A673 (cell line): ENCODE measurements at regions of chr6 and their contacts with region 1.

Region 1: GRCh38 chr6:88211446-88211845 is 45.3 kb upstream of the CNR1 start:
- DNase-seq: peak; percentile 15
- H3K4me3 ChIP-seq: no peak overlapping the region
- H3K27ac ChIP-seq: no peak overlapping the region
- H3K4me1 ChIP-seq: no peaks in the 10 kb centered on the region
- H3K27me3 ChIP-seq: no peaks in the 10 kb centered on the region
- CTCF ChIP-seq: no peak

Region 2: DNA sequence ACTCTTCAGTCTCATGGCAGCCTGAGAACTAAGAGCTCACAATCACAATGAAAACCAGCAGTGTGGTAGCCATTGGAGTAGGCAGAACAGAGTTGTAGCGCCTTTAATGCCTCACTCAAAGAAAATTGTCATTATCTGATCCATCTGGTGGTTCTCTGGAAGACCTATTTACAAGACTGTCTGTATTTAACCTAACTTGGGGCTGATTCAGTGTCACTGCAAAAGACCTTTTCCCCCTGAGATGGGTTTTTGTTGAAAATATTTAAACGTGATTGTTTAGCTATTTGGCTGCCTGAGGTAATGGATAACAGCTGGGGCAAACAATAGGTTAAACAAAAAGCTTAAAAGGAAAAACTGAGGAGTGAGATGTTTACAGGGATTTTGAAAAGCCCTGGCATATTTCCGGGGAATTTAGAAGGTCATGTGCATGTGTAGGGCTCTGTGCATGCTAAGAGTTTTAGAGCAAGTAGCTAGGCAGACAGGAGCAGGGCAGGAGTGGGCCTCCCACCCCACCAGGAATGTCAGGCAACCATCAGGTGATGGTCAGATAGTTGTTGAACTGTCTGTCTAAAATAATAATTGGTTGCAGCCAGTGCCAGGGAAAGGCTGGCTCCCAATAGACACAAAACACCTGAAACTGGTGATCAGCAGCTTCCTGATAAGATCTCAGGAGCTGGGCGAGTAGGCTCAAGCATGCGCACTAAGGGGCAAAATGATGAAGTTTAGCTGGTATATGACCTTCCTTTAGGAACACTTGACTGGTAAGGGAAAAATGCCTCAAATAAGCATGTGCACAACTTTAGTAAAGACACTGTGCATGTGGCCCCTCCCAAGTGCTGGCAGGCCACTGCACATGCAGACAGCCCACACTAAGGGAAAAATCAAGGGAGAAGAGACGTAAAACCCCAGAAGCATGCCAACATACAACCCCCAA is 438.6 kb before region 1 on chr6:
- CTCF ChIA-PET with region 1: no interaction called
- POLR2A ChIA-PET with region 1: no interaction called
- intact Hi-C with region 1: no loop called
- DNase-seq: no peak
- H3K4me3 ChIP-seq: no peak overlapping the region
- H3K27ac ChIP-seq: no peak overlapping the region
- H3K4me1 ChIP-seq: no peaks in the 10 kb centered on the region
- H3K27me3 ChIP-seq: no peaks in the 10 kb centered on the region
- CTCF ChIP-seq: no peak

Region 3: DNA sequence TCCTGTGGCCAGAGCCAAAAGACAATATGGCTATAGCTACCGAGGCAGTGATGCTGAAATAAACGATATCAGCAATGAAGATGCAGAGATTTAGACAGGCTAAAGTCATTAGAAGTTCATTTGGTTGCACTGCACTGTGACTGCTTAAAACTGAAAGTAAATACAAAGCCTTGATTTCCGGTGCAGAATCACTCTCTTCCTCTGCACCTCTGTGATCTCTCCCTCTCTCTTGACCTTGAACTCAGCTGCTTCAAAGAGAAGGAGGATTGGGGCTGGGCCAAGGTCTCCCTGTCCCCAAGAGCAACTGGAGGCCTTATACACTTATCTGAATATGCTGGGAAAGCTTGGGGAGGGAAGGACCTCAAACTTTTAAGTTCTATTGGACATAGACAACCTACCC is 198.4 kb before region 1 on chr6:
- CTCF ChIA-PET with region 1: no interaction called
- POLR2A ChIA-PET with region 1: no interaction called
- intact Hi-C with region 1: no loop called
- DNase-seq: no peak
- H3K4me3 ChIP-seq: no peak overlapping the region
- H3K27ac ChIP-seq: no peak overlapping the region
- H3K4me1 ChIP-seq: peaks cover 10% of the 10 kb centered on the region
- H3K27me3 ChIP-seq: peaks cover 5% of the 10 kb centered on the region
- CTCF ChIP-seq: no peak

Region 4: DNA sequence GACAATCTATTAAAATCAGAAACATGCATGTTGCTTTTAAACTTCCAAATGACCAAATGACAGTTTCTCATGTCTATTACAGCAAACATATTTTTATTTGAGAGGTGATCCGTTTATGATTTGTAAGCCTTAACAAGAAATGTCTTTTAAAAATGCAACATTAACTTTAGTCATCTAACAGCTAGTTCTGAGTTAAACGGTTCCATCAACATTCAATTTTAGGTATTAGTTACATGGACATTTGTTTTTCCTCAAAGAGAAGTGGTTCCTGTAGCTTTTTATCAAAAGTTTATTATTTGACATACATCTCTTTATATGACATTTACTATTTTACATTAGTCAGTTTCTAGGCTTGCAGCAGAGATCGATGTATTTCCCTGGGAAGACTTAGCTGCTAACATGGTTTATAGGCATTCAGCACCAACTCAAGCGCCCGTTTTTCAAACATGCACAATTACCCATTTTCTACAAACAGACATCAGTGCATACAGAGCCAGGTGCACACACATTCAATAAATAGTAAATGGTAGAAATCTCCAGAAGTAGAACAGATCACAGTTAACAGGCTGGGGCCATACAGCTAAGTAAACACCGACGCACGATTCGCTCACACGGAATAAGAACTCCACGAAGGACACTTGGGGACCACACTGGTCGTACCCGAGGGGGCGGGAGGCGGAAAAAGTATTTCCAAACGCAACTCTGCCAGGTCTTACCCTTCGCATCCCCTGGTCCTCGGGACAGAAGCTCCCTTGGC is 46.2 kb before region 1 on chr6:
- CTCF ChIA-PET with region 1: interaction called, 12 read pairs
- POLR2A ChIA-PET with region 1: no interaction called
- intact Hi-C with region 1: no loop called
- DNase-seq: no peak
- H3K4me3 ChIP-seq: peak overlapping the region; percentile 37
- H3K27ac ChIP-seq: no peak overlapping the region
- H3K4me1 ChIP-seq: peaks cover 9% of the 10 kb centered on the region
- H3K27me3 ChIP-seq: peaks cover 88% of the 10 kb centered on the region
- CTCF ChIP-seq: no peak